AG04450 (cell line): ENCODE measurements at regions of chr5 and their contacts with region 1.

Region 1: DNA sequence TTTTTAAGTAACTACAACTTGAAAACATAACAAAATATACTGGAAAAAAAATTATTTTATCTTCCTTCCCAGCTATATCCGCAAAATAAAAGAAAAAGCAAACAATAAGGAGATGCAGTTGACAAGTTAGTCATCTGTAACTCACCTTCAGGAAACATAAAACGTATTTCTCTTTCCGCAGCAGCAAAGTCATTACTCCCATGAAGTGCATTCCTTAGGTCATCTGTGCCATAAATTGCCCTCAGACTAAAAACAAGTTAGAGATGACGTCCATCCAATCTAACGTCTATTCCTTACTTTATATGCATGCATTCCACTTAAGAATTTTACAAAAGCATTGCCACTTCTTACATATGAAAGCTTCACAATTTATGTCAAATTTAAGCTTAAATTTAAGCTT is 10.9 kb downstream of the NME5 start:
- DNase-seq: no peak
- H3K4me3 ChIP-seq: no peak overlapping the region
- H3K27ac ChIP-seq: no peak overlapping the region
- H3K27me3 ChIP-seq: no peaks in the 10 kb centered on the region
- CTCF ChIP-seq: no peak

Region 2: DNA sequence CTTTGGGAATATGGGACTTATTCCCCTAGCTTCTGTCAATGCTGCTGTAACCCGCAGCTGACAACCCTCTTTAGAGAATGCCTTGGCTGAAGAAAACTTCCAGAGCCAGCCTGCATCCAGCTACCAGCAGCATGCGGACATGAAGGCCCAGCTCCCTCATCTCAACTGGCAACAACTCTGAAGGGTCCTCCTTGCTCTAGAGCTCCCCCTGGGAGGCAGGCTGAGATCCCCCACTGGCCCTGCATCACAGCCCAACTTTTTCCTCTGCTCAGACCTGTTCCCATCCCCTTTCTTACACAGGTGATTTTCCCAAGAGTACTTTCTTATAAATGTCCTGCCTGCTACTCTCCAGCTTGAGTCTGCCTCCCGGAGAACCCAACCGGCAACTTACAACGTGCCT is 63.2 kb before region 1 on chr5:
- CTCF ChIA-PET with region 1: interaction called, 17 read pairs
- POLR2A ChIA-PET with region 1: no interaction called
- DNase-seq: no peak
- H3K4me3 ChIP-seq: no peak overlapping the region
- H3K27ac ChIP-seq: no peak overlapping the region
- H3K27me3 ChIP-seq: peaks cover 4% of the 10 kb centered on the region
- CTCF ChIP-seq: peak; percentile 33

Region 3: DNA sequence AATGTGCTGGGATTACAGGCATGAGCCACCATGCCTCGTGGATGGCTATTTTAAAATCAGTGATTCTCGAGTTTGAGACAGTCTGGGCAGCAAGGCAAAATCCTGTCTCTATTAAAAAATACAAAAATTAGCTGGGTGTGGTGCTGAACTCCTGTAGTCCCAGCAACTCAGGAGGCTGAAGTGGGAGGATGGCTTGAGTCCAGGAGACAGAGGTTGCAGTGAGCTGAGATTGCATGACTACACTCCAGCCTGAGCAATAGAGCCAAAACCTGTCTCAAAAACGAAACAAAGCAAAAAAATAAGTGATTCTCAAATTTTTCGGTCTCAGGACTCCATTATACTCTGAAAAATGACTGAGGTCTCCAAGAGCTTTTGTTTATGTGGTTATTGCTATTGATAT is 494.7 kb after region 1 on chr5:
- CTCF ChIA-PET with region 1: no interaction called
- POLR2A ChIA-PET with region 1: no interaction called
- DNase-seq: no peak
- H3K4me3 ChIP-seq: no peak overlapping the region
- H3K27ac ChIP-seq: no peak overlapping the region
- H3K27me3 ChIP-seq: no peaks in the 10 kb centered on the region
- CTCF ChIP-seq: no peak